ENCODE measurements at regions of chr12 and their contacts with region 1.

Region 1: DNA sequence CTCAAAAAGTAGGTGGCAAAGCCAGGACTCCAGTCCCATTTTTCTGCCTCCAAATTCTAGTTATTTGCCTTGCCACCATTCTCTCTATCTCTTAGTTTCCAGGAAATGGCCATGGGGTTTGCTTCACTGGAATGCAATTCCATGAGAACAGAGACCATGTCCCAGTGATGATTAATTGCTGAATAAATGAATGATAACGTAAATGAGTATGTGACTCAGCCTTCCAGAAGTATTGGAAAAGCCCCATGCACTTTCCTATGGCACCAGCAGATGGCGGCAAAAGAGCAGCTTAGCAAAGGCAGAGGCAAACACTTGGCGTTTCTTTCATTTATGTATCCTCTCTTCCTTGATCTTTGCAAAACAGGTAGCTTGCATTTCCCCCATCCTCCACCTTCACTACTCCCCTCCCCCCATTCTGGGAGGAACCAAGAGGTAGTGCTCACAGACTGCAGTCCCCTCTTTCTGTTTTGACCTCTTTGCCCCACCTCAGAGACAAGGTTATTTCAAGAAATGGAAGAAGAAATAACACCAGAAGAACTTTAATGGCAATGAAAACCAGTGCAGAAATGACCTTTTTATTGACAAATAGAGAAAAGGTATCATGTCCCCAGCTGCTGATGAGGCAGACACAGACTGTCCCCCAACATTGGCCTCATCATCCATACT is 21.3 kb downstream of the TBX3 start:
- DNase-seq: peak; percentile 71

Region 2: GRCh38 chr12:115749071-115749841 is 1086.6 kb after region 1 on chr12:
- in situ Hi-C with region 1: loop called (anchors 25 kb)
- DNase-seq: no peak

Region 3: GRCh38 chr12:115916910-115917668 is 1254.4 kb after region 1 on chr12:
- in situ Hi-C with region 1: loop called (anchors 25 kb)
- DNase-seq: peak; percentile 56